GM13976 (cell line): ENCODE measurements at regions of chr5 and their contacts with region 1.

Region 1: GRCh38 chr5:43389679-43390329 is 22.4 kb downstream of the CCL28 start:
- DNase-seq: peak; percentile 65
- CTCF ChIP-seq: peak; percentile 73

Region 2: GRCh38 chr5:42596817-42597216 is 793.0 kb before region 1 on chr5:
- in situ Hi-C with region 1: no loop called
- DNase-seq: no peak
- CTCF ChIP-seq: no peak

Region 3: GRCh38 chr5:43105369-43106289 is 284.2 kb before region 1 on chr5:
- in situ Hi-C with region 1: loop called (anchors 10 kb)
- DNase-seq: peak; percentile 87
- CTCF ChIP-seq: peak; percentile 100

Region 4: DNA sequence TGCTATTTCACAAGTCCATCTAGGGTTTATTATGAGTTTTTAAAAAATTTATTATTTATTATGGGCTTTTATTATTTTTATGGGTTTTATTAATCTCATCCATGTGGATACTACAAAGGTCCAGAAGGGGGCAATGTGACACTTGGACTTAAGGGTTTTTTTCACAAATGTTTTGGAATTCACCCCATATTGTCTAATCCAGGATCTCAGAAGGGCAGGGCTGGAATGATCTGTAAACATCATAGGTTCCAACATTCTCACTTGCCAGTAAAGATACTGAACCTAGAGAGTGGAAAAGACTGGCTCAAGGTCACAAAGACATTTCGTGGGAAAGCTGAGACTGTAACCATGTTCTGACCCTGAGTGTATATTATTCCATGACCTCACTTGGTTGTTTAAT is 162.1 kb before region 1 on chr5:
- in situ Hi-C with region 1: loop called (anchors 10 kb)
- DNase-seq: peak; percentile 28
- CTCF ChIP-seq: peak; percentile 26